BJ (cell line): ENCODE measurements at regions of chr12 and their contacts with region 1.

Region 1: DNA sequence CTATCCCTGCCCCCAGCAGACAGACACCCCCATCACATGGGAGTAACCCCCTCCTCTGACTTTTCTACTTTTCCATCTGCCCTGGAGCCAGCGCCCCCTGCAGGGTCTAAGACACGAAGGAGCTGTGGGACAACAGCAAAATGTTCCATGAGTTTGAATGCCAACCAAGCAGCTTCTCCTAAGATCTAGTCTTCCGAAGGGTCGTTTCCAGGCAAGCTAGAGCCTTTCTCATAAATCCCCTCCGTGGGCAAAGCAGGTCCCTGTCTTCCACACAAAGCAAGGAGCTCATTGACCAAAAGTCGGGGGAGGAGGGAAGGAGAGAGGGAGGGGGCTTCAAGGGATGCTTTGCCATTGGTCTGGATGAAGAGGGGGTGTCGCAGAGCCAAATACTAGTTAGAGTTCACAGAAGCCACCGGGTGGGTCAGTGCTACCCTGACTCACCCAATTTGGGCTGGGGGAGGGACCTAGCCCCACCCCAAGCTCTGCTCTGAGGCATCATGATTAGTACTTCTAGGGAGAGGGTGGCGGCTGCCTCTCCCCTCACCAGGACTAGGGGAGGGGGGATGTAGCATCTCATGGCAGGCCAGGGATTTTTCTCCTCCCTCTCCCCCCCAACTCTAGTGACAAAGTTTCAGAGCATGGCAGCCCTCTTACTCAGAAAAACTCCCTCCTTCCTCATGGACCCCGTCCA is 1.6 kb downstream of the MSI1 start:
- DNase-seq: no peak
- H3K4me3 ChIP-seq: no peak overlapping the region
- H3K27me3 ChIP-seq: peaks cover 48% of the 10 kb centered on the region
- CTCF ChIP-seq: peak; percentile 31; the same call in 1 of the 2 replicates

Region 2: GRCh38 chr12:120356567-120357030 is 10.8 kb before region 1 on chr12:
- CTCF ChIA-PET with region 1: interaction called, 12 read pairs
- POLR2A ChIA-PET with region 1: no interaction called
- DNase-seq: peak; percentile 20
- H3K4me3 ChIP-seq: no peak overlapping the region
- H3K27me3 ChIP-seq: peaks cover 4% of the 10 kb centered on the region; the same call in 1 of the 2 replicates
- CTCF ChIP-seq: peak; percentile 89